Natural killer cell (primary cell): ENCODE measurements at regions of chr6 and their contacts with region 1.

Region 1: DNA sequence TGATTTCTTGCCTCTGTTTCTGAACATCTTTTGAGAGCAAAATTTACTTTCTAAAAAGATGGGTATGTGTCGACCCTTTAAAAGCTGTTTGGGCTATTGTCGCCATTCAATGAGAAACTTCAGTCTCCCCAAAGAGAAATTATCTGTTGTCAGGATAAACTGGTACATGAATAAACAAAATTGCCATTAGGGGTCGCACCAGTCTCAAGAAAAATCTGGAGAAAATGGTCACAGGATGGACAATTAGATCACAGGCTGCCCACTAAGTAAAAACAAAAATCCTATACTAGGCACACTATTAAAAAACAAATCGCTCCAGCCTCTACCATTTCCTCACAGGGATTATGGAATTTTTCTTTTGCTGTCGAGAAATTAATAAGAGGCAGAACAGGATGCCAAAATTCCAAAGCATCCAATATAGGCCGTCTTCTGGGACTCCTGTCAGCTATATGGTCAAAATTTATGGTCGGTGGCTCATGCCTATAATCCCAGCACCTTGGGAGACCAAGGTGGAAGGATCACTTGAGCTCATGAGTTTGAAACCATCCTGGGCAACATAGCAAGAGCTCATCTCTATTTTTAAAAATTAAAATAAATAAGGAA is 5.5 kb upstream of the HLA-E start:
- DNase-seq: peak in 1 of 2 donors; percentile 79
- ATAC-seq: peak in 1 of 3 donors; percentile 27
- H3K4me3 ChIP-seq: no peak overlapping the region
- H3K4me3 Mint-ChIP-seq: no peak overlapping the region
- H3K27ac ChIP-seq: no peak overlapping the region
- H3K27ac Mint-ChIP-seq: no peak overlapping the region
- H3K4me1 ChIP-seq: peaks cover 25% of the 10 kb centered on the region
- H3K4me1 Mint-ChIP-seq: peaks cover 13 to 20% of the 10 kb centered on the region in 2 donors
- H3K27me3 ChIP-seq: peaks cover 35% of the 10 kb centered on the region
- H3K27me3 Mint-ChIP-seq: peaks cover 32 to 37% of the 10 kb centered on the region in 2 donors
- CTCF ChIP-seq: peak; percentile 76

Region 2: GRCh38 chr6:30520522-30520921 is 36.7 kb after region 1 on chr6:
- intact Hi-C with region 1: no loop called
- DNase-seq: no peak
- ATAC-seq: no peak
- H3K4me3 ChIP-seq: no peak overlapping the region
- H3K4me3 Mint-ChIP-seq: no peak overlapping the region
- H3K27ac ChIP-seq: no peak overlapping the region
- H3K27ac Mint-ChIP-seq: peak overlapping the region in 1 of 2 donors; percentile 47
- H3K4me1 ChIP-seq: peaks cover 30% of the 10 kb centered on the region
- H3K4me1 Mint-ChIP-seq: peaks cover 21% of the 10 kb centered on the region in 2 donors
- H3K27me3 ChIP-seq: no peaks in the 10 kb centered on the region
- H3K27me3 Mint-ChIP-seq: no peaks in the 10 kb centered on the region
- CTCF ChIP-seq: no peak

Region 3: DNA sequence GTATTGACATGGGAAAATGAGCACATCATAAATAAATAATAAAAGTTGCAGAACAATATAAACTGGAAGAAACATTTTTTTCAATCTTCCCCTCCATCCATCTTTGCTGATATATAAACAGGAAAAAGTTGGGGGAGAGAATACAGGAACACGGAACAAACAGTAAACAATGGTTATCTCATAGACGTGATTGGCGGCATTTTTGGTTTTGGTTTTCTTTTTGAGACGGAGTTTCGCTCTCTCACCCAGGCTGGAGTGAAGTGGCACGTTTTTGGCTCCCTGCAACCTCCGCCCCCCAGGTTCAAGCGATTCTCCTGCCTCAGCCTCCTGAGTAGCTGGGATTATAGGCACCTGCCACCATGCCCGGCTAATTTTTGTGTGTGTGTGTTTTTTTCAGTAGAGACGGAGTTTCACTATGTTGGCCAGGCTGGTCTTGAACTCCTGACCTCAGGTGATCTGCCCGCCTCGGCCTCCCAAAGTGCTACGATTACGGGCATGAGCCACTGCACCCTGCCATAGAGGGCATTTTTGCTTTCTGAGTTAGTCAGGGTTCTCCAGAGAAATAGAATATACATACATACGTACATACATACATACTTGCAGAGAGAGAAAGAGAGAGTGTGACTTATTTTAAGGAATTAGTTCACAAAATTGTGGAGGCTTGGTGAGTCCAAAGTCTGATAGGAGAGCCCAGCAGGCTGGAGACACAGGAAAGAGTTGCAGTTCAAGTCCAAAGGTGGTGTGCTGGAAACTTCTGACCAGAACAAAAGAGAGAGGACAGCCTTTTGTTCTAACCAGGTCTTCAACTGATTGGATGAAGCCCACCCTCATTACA is 49.9 kb after region 1 on chr6:
- intact Hi-C with region 1: loop called (anchors 1 kb)
- DNase-seq: peak in 1 of 2 donors; percentile 66
- ATAC-seq: peak in 1 of 3 donors; percentile 50
- H3K4me3 ChIP-seq: no peak overlapping the region
- H3K4me3 Mint-ChIP-seq: peak overlapping the region; percentile 68
- H3K27ac ChIP-seq: no peak overlapping the region
- H3K27ac Mint-ChIP-seq: peak overlapping the region; percentile 14 to 80
- H3K4me1 ChIP-seq: peaks cover 26% of the 10 kb centered on the region
- H3K4me1 Mint-ChIP-seq: peaks cover 12 to 17% of the 10 kb centered on the region in 2 donors
- H3K27me3 ChIP-seq: no peaks in the 10 kb centered on the region
- H3K27me3 Mint-ChIP-seq: no peaks in the 10 kb centered on the region
- CTCF ChIP-seq: no peak

Region 4: DNA sequence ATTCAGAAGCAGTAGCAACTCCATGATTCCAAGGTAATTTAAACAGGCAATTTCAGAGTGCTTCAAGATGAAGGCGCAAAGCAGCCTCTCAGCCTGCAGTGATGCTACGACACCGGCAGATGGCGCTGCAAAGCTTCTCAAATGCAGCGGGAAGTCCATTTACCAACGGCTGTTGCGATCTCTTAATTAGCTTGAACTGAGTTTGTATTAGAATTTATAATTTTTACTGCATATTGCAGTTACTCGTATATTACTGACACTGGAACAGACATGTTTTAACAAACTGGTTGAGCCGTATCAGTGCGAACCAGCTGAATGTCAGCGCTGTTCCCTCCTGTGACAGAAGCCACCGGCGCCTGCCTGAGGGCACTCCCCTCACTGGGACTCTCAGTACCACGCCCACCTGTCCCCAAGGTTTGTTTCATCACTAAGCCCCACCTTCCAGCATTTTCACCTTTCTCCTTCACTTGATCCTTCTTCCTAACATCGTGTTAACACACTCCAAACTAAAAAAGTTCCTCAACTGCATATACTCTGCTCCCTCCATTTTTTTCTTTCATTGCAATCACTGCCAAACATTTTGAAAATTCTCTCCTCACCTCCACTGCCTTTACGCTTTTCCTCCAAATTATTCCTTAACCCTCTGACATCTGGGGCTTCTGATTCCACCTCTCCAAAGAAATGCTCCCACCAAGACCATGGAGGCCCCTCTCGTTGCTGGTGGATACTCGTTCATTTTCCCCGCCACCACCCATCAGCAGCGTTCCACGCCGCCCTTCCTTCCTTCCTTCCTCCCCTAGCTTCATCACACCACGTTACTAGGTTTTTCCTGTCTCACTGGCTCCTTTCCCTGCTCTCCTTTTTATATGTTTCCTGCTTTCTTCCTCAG is 58.0 kb after region 1 on chr6:
- intact Hi-C with region 1: loop called (anchors 1 kb)
- DNase-seq: peak; percentile 76 to 94
- ATAC-seq: peak; percentile 72 to 83 (median 72)
- H3K4me3 ChIP-seq: peak overlapping the region; percentile 4
- H3K4me3 Mint-ChIP-seq: peak overlapping the region; percentile 86
- H3K27ac ChIP-seq: peak overlapping the region; percentile 32
- H3K27ac Mint-ChIP-seq: peak overlapping the region; percentile 69 to 81
- H3K4me1 ChIP-seq: peaks cover 30% of the 10 kb centered on the region
- H3K4me1 Mint-ChIP-seq: peaks cover 32 to 34% of the 10 kb centered on the region in 2 donors
- H3K27me3 ChIP-seq: no peaks in the 10 kb centered on the region
- H3K27me3 Mint-ChIP-seq: no peaks in the 10 kb centered on the region
- CTCF ChIP-seq: peak; percentile 94

Region 5: DNA sequence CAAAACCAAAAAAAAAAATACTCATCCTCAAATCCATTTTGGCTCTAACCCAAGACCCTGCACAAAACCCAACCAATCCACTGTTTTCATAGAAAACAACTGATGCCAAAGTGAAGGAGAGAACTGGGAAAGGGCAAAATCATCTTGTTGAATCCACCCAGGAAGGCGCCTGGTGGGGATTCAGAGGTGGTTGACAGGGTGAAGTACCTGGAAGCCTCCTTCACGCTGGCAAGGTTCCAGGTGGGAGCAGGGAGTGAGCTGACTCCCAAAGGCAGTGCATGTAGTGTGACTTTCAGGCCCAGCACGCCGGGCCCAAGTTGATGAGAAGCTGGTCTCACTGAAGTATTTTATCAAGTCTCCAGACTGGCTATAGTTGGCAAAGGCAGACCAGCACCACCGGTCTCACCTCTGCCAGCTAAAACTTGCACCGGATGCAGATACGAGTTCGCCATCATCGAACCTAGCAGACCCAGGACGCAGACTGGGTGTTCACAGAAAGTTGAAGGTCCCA is 116.7 kb after region 1 on chr6:
- intact Hi-C with region 1: loop called (anchors 1 kb)
- DNase-seq: no peak
- ATAC-seq: no peak
- H3K4me3 ChIP-seq: no peak overlapping the region
- H3K4me3 Mint-ChIP-seq: peak overlapping the region; percentile 32
- H3K27ac ChIP-seq: peak overlapping the region; percentile 51
- H3K27ac Mint-ChIP-seq: peak overlapping the region; percentile 70 to 73
- H3K4me1 ChIP-seq: peaks cover 33% of the 10 kb centered on the region
- H3K4me1 Mint-ChIP-seq: peaks cover 37 to 40% of the 10 kb centered on the region in 2 donors
- H3K27me3 ChIP-seq: no peaks in the 10 kb centered on the region
- H3K27me3 Mint-ChIP-seq: no peaks in the 10 kb centered on the region
- CTCF ChIP-seq: no peak

Region 6: DNA sequence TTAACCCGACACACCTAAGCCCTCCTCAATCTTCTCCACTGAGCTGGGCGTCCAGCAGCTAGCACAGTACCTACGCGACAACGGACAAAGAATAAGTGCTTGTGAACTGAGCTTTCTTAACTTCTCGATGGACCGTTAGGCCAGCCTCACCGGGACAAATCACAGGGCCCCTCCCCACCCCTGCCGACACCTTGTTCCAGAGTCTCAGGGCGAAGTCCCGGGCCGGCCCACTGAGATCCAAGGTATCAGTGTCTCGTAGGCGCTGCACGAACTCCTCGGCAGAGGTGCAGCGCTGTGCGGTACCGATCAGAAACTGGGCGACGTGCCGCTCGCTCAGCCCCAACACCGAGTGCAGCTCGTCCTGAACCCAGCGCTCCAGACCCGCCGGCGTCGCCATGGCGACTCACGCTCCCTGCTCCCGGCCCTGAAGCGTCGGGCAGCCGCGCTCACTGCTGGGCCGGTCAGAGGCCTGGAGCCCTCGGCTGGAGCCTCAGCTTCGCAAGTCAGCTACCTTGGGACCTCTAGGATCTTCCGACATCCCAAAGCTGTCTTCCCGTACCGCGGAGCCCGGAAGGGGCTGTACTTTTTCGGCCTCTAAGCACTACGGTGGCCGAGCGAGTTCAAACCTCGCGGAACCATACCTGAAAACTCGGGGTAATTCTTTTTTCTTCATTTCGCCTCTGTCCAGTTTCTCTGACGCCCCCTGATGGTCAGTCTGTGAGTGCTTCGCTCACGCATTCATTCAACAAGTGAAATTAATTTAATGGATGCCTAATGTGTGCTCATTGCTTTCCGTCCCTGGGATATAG is 188.9 kb after region 1 on chr6 and contains the start of gene DHX16:
- intact Hi-C with region 1: loop called (anchors 1 kb)
- DNase-seq: peak; percentile 85 to 96
- ATAC-seq: peak; percentile 88 to 97 (median 89)
- H3K4me3 ChIP-seq: peak within 1 kb of the TSS; percentile 76
- H3K4me3 Mint-ChIP-seq: peak within 1 kb of the TSS; percentile 87
- H3K27ac ChIP-seq: peak within 1 kb of the TSS; percentile 24
- H3K27ac Mint-ChIP-seq: peak within 1 kb of the TSS; percentile 83 to 85
- H3K4me1 ChIP-seq: peaks cover 17% of the 10 kb centered on the region
- H3K4me1 Mint-ChIP-seq: peaks cover 27 to 49% of the 10 kb centered on the region in 2 donors
- H3K27me3 ChIP-seq: no peaks in the 10 kb centered on the region
- H3K27me3 Mint-ChIP-seq: no peaks in the 10 kb centered on the region
- CTCF ChIP-seq: peak; percentile 68
- total RNA-seq, gene DHX16: 27.3 to 35.7 (median 27.7) TPM